ENCODE measurements at regions of chr13 and their contacts with region 1.

Region 1: DNA sequence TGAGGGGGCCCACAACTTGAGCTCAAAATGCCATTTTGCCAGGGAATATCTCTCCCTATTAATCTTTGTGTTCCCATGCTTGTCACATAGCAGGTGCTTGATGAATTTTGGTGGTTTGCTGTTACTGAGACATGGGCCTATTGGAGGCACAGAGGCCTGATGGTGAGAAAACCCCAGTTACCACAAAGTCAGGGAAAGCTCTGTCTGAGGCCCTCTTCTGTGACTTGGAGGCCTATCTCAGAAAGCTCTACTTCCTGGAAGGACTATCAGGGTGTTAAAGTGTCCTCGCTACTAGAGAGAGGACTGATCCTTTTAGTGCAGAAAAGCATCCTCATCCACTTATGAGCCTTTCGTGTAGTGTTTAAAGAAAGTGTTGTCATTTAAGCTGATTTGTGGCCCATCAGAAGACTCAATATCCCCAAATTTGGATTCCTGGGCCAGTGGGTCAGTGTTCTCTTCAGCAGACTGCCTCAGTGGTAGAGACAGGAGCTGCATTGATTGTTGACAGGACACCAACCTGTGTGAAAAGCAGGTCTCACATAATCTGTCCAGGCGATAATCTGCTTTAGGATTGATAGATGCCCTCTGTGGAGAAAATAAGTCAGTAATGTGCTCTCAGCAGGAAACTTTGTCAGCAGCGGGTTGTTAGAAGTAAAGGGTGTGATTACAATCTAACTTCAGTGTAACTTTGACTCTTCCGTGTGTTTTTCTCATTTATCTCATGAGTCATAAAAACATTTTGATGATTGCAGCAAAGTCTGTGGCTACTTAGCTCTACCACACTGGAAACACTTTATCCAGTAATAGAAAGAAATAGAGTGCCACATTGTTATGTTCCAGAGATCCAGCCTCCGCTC is 121.0 kb downstream of the AKAP11 start:
- DNase-seq: peak; percentile 66
- H3K4me3 Mint-ChIP-seq: peak overlapping the region; percentile 77
- H3K27ac Mint-ChIP-seq: peak overlapping the region; percentile 99
- H3K4me1 Mint-ChIP-seq: peaks cover 80% of the 10 kb centered on the region
- H3K27me3 Mint-ChIP-seq: no peaks in the 10 kb centered on the region

Region 2: DNA sequence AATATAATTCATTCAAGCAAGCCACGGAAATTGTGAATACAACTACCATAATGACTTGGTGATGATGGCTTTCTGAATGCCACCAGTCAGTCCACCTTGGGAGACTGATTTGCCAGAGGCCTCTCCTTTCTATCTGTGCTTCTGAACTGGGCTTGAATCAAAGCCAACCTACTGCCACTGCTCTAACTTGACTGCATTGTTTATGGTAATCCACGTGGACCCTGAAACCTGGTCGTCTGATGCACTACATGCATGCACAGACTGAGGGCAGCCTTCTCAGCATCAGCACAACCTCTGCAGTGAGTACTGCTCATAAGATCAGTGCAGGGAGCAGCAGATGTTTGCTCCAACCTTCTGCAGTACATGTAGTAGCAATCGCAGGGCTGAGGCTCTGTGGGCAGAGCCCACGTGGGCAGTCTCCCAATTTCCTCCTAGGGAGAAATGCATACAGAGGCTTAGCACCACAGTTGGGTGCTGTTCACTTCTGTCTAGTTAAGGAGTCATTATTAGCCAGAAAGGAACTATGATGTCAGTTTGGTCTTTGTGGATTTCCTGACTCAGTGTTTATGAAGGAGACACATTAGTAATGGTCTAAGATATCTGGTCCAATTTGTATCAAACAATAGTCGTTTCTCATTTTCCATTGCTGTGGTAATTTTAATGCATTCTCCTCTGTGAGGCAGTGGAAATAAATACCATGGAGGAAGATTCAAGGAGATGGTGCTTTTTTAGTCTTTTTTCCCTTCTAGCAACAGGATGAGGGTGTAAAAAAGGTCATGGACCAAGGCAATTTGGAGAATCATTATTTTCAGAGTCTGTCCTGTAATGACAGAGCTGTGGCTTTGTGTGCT is 38.5 kb before region 1 on chr13:
- CTCF ChIA-PET with region 1: interaction called, 4 read pairs
- POLR2A ChIA-PET with region 1: interaction called, 30 read pairs
- DNase-seq: peak; percentile 64
- H3K4me3 Mint-ChIP-seq: no peak overlapping the region
- H3K27ac Mint-ChIP-seq: peak overlapping the region; percentile 89
- H3K4me1 Mint-ChIP-seq: peaks cover 60% of the 10 kb centered on the region
- H3K27me3 Mint-ChIP-seq: no peaks in the 10 kb centered on the region

Region 3: DNA sequence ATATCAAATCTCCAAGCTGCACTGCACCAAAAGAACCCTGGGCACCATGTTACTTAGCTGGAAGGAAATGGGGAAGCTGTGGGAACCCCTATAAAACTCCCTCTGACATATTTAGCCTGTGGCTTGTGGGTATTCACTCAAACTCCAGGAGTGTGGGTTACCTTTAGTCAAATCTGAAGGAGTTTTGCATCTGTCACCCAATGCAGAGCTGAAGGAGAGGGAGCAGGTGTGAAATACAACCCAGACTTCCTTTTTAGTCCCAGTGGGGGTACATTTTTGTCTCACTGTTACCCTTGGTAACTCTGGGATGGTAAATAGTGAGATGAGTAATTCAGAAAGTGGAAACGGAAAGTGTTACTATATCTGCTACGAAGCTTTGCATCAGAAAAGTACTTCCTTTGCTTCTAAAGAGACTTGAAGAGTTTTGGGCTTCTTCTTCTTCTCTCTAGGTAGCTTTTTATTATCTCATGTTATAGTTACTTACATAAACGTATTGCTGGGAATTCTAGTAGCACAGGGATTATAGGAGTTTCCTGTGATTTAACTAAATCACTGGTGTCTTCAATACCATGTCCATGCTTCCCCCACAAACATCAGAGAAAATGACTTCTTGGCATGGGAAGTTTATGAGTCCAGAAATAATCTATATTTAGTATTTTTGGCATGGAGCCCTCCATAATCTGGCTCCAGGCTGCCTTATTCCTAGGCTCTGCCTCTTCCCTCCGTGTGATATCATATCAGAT is 15.1 kb before region 1 on chr13:
- CTCF ChIA-PET with region 1: interaction called, 13 read pairs
- POLR2A ChIA-PET with region 1: interaction called, 301 read pairs
- DNase-seq: peak; percentile 55
- H3K4me3 Mint-ChIP-seq: no peak overlapping the region
- H3K27ac Mint-ChIP-seq: peak overlapping the region; percentile 90
- H3K4me1 Mint-ChIP-seq: peaks cover 70% of the 10 kb centered on the region
- H3K27me3 Mint-ChIP-seq: no peaks in the 10 kb centered on the region

Region 4: GRCh38 chr13:42405665-42406390 is 12.9 kb after region 1 on chr13:
- CTCF ChIA-PET with region 1: interaction called, 4 read pairs
- POLR2A ChIA-PET with region 1: interaction called, 88 read pairs
- DNase-seq: peak; percentile 66
- H3K4me3 Mint-ChIP-seq: peak overlapping the region; percentile 66
- H3K27ac Mint-ChIP-seq: peak overlapping the region; percentile 86
- H3K4me1 Mint-ChIP-seq: peaks cover 61% of the 10 kb centered on the region
- H3K27me3 Mint-ChIP-seq: no peaks in the 10 kb centered on the region

Region 5: GRCh38 chr13:42497798-42498197 is 104.9 kb after region 1 on chr13:
- CTCF ChIA-PET with region 1: interaction called, 7 read pairs
- POLR2A ChIA-PET with region 1: interaction called, 102 read pairs
- DNase-seq: peak; percentile 49
- H3K4me3 Mint-ChIP-seq: no peak overlapping the region
- H3K27ac Mint-ChIP-seq: peak overlapping the region; percentile 83
- H3K4me1 Mint-ChIP-seq: peaks cover 58% of the 10 kb centered on the region
- H3K27me3 Mint-ChIP-seq: no peaks in the 10 kb centered on the region

Region 6: GRCh38 chr13:42991892-42992763 is 599.2 kb after region 1 on chr13 and contains the start of gene EPSTI1:
- CTCF ChIA-PET with region 1: interaction called, 3 read pairs
- POLR2A ChIA-PET with region 1: interaction called, 10 read pairs
- DNase-seq: peak; percentile 87
- H3K4me3 Mint-ChIP-seq: peak within 1 kb of the TSS; percentile 96
- H3K27ac Mint-ChIP-seq: peak within 1 kb of the TSS; percentile 99
- H3K4me1 Mint-ChIP-seq: peaks cover 65% of the 10 kb centered on the region
- H3K27me3 Mint-ChIP-seq: no peaks in the 10 kb centered on the region
- total RNA-seq, gene EPSTI1: 128 to 135 TPM

Measured in activated CD4-positive, alpha-beta memory T cell treated with anti-CD3 and anti-CD28 coated beads, Interleukin-2, amount 10 ng/mL, durations not matched to agents 7 days and 5 days (primary cell).